OCI-LY7 (cell line): ENCODE measurements at regions of chr4 and their contacts with region 1.

Region 1: GRCh38 chr4:39710098-39710896 is 12.4 kb downstream of the UBE2K start:
- DNase-seq: no peak
- H3K4me3 ChIP-seq: no peak overlapping the region
- H3K27ac ChIP-seq: no peak overlapping the region
- H3K4me1 ChIP-seq: peaks cover 16% of the 10 kb centered on the region
- CTCF ChIP-seq: no peak

Region 2: GRCh38 chr4:39913471-39913870 is 203.2 kb after region 1 on chr4:
- CTCF ChIA-PET with region 1: no interaction called
- POLR2A ChIA-PET with region 1: interaction called, 10 read pairs
- intact Hi-C with region 1: no loop called
- DNase-seq: no peak
- H3K4me3 ChIP-seq: no peak overlapping the region
- H3K27ac ChIP-seq: no peak overlapping the region
- H3K4me1 ChIP-seq: no peaks in the 10 kb centered on the region
- CTCF ChIP-seq: no peak

Region 3: DNA sequence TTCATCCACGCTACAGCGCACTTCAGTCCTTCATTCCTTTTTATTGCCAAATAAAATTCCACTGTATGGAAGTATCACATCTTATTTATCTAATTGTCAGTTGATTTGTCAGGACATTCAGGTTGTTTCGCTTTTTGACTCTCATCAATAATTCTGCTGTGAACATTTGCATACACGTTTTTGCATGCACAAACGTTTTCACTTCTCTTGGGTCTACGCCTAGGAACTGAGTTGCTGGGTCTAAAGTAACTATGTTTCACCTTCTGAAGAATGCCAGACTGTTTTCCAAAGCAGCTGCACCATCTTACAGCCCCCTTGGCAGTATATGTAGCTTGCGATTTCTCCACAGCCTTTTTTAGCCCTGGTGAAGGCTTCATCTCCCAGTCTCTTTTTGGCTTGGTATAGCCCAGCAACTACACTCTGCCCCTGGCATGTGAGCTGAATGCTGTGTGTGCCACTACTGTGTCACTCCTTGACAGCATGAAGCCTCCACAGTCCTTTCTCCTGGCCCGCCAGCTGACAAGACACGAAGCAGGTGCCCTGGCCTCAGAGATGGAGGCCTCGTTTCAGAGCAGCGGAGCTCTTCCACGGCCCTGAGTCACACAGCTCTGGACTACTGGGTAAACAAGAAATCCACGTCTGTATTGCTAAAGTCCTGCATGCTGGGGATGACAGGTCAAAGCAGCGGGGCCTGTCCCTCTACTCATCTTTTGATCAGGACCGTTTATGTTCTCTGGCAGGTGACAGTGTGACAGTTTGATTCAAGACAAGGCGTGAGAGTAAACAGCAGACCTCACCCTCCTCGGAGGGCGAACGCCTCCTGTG is 1114.9 kb after region 1 on chr4:
- CTCF ChIA-PET with region 1: no interaction called
- POLR2A ChIA-PET with region 1: no interaction called
- intact Hi-C with region 1: no loop called
- DNase-seq: no peak
- H3K4me3 ChIP-seq: no peak overlapping the region
- H3K27ac ChIP-seq: no peak overlapping the region
- H3K4me1 ChIP-seq: no peaks in the 10 kb centered on the region
- CTCF ChIP-seq: no peak